ENCODE measurements at regions of chr20 and their contacts with region 1.

Region 1: GRCh38 chr20:16517946-16518783 is 55.1 kb downstream of the KIF16B start:
- DNase-seq: peak in 1 of 5 donors; percentile 29
- ATAC-seq: peak; percentile 63 to 78 (median 74)
- H3K4me3 ChIP-seq: no peak overlapping the region
- H3K27ac ChIP-seq: no peak overlapping the region
- H3K4me1 ChIP-seq: no peaks in the 10 kb centered on the region
- H3K27me3 ChIP-seq: no peaks in the 10 kb centered on the region
- CTCF ChIP-seq: peak; percentile 39 to 70 (median 56)
- POLR2A ChIP-seq: no peak

Region 2: GRCh38 chr20:16701296-16701695 is 183.1 kb after region 1 on chr20:
- intact Hi-C with region 1: loop called in 1 of 10 experiments (anchors 5 kb)
- DNase-seq: no peak
- ATAC-seq: no peak
- H3K4me3 ChIP-seq: no peak overlapping the region
- H3K27ac ChIP-seq: no peak overlapping the region
- H3K4me1 ChIP-seq: no peaks in the 10 kb centered on the region
- H3K27me3 ChIP-seq: peaks cover 0 to 5% (median 0%) of the 10 kb centered on the region in 9 donors
- CTCF ChIP-seq: peak in 5 of 12 donors; percentile 13 to 34 (median 18)
- POLR2A ChIP-seq: no peak

Region 3: DNA sequence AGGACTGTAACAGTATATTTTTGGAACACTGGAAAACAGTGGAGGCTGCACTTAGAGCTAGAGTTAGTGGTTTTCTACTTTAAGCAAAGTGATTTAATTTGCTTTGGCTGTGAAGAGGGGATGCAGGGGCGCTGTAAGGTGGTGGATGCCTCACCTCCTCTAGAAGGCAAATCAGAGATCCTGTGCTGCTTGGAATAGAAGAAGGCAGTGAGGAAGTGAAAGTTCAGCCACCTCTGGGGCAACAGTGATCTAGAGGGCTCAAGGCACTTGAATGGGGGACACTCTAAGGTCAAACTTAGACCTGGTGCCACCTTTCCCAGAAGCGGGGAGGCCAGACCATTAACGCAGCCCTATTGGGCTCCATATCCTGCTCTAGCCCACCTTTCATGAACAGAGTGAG is 192.6 kb after region 1 on chr20:
- intact Hi-C with region 1: loop called in 1 of 10 experiments (anchors 10 kb)
- DNase-seq: no peak
- ATAC-seq: no peak
- H3K4me3 ChIP-seq: no peak overlapping the region
- H3K27ac ChIP-seq: no peak overlapping the region
- H3K4me1 ChIP-seq: peaks cover 0 to 11% (median 0%) of the 10 kb centered on the region in 12 donors
- H3K27me3 ChIP-seq: peaks cover 0 to 5% (median 0%) of the 10 kb centered on the region in 9 donors
- CTCF ChIP-seq: no peak
- POLR2A ChIP-seq: no peak

Region 4: GRCh38 chr20:16761305-16761829 is 243.2 kb after region 1 on chr20:
- intact Hi-C with region 1: loop called (anchors 1 to 10 kb)
- DNase-seq: peak in 4 of 5 donors; percentile 26 to 38 (median 26)
- ATAC-seq: peak in 3 of 4 donors; percentile 76 to 78 (median 78)
- H3K4me3 ChIP-seq: no peak overlapping the region
- H3K27ac ChIP-seq: no peak overlapping the region
- H3K4me1 ChIP-seq: peaks cover 0 to 5% (median 0%) of the 10 kb centered on the region in 12 donors
- H3K27me3 ChIP-seq: peaks cover 0 to 14% (median 2%) of the 10 kb centered on the region in 9 donors
- CTCF ChIP-seq: peak; percentile 47 to 76 (median 68)
- POLR2A ChIP-seq: no peak

Measured in heart left ventricle (tissue), 16 donors.